ENCODE measurements at regions of chrX and their contacts with region 1.

Region 1: GRCh38 chrX:110163488-110163887 is 154.4 kb downstream of the AMMECR1 start:
- DNase-seq: no peak
- ATAC-seq: no peak

Region 2: DNA sequence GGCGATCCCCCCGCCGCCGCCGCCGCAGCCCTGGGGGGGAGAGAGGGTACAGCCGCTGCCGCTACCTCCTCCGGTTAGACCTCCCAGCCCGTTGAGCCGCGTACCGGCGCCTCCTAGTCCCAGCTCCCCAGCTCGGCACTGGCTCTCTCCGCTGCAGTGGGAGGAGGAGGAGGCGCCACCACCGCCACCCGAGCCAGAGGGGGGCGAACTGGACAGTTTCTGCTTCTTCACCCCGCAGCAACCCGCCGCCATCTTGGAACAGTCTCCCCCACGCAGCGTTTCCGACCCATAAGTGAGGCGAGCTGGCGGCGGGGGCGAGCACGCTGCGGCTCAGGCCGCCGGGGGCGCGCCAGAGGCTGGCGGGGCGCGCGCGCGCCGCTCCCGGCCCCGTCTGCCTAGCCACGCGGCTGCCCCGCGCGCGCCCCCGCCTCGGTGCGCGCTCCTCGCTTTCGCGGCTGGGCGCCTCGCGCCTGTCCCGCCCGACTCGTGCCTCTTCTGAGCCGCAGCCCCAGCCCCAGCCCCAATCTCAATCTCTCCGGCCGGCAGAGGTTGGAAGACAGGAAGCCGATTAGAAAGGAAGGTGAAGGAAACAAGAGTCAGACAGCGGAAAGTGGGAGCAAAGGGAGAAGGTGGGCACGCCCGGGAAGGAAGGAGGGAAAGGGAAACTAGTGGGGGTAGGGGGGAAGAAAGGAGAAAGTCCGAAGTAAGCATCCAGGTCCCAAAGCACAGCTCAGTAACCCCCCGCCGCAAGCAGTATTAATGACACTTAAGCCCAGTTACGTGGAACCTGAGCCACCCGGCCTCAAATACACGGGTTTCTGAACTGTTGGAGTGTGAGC is 154.6 kb after region 1 on chrX and contains the start of gene AMMECR1:
- intact Hi-C with region 1: loop called (anchors 5 kb)
- DNase-seq: peak; percentile 90
- ATAC-seq: peak; percentile 99
- total RNA-seq, gene AMMECR1: 1.1 TPM

Region 3: GRCh38 chrX:110412971-110413721 is 249.7 kb after region 1 on chrX:
- intact Hi-C with region 1: loop called (anchors 2 kb)
- DNase-seq: peak; percentile 70
- ATAC-seq: peak; percentile 84